ENCODE measurements at regions of chr4 and their contacts with region 1.

Region 1: GRCh38 chr4:164956766-164957643 is 20.5 kb downstream of the TRIM61 start:
- DNase-seq: peak; percentile 88
- ATAC-seq: peak; percentile 96

Region 2: GRCh38 chr4:164716901-164717300 is 240.1 kb before region 1 on chr4:
- intact Hi-C with region 1: no loop called
- DNase-seq: no peak
- ATAC-seq: peak; percentile 64

Region 3: GRCh38 chr4:165070560-165070959 is 113.6 kb after region 1 on chr4:
- intact Hi-C with region 1: loop called (anchors 5 kb)
- DNase-seq: no peak
- ATAC-seq: no peak

Region 4: DNA sequence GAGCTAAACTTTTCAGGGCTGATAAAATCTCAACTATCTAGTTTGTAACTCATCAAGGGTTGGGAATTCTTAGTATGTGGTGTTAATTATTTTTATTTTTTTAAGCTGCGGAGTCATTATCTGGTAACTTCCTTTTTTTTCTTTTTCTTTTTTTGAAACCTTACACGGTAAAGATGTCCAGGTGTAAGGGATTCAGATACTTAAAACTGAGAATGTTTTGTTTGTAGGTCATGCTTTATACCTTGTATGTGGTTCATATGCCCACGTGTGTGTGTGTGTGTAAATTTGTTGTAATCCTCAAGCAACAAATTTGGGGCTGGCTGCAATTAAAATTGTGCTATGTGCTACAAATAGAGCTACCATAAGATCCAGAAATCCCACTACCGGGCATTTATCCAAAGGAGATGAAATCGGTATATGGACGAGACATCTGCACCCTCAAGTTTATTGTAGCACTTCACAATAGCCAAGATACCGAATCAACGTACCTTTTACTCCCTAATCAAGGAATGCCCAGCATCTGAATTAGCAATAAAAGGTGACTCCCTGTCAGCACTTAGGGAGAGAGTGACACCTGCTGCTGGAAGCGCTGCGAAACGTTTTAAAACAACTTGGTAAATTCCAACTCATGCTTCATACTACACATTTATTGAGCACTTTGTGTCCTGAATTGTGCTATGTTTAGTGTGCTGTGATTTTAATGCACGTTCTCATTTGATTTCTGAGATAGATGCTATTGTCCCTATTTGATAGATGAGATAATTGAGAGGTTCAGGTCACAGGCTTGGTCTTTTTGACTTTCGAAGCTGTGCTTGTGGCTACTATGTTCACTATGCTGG is 386.6 kb after region 1 on chr4:
- intact Hi-C with region 1: no loop called
- DNase-seq: no peak
- ATAC-seq: no peak